ENCODE measurements at regions of chr2 and their contacts with region 1.

Region 1: GRCh38 chr2:237674731-237675276 is 47.4 kb downstream of the LRRFIP1 start:
- DNase-seq: no peak
- ATAC-seq: peak; percentile 35; the same call in 1 of the 2 replicates
- H3K4me3 ChIP-seq: no peak overlapping the region
- H3K27ac ChIP-seq: no peak overlapping the region
- H3K4me1 ChIP-seq: peaks cover 5 to 21% of the 10 kb centered on the region in 2 experiments
- H3K27me3 ChIP-seq: peaks cover 5% of the 10 kb centered on the region; the same call in 1 of the 2 replicates
- CTCF ChIP-seq: no peak
- POLR2A ChIP-seq: no peak
- RAD21 ChIP-seq: no peak

Region 2: DNA sequence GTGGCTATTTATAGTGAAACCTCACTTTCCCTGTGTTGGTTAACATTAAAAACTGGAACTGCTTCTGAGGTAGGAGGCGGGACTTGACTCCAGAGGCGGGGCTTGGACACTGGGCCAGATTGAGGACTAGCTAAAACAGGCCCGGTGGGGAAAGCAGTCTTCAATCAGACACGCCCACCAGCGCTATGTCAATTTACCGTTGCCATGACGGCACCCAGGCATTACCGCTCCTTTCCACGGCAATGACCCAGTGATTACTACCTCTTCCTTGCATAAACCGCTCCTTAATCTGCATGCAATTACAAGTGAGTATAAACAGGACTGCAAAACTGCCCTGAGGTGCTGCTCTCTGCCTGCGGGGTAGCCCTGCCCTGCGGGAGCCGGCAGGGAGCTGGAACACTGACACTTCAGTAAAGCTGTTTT is 12.1 kb before region 1 on chr2:
- CTCF ChIA-PET with region 1: interaction called, 16 read pairs
- POLR2A ChIA-PET with region 1: no interaction called
- RAD21 ChIA-PET with region 1: no interaction called
- intact Hi-C with region 1: no loop called
- DNase-seq: peak; percentile 61
- ATAC-seq: peak; percentile 96
- H3K4me3 ChIP-seq: no peak overlapping the region
- H3K27ac ChIP-seq: no peak overlapping the region
- H3K4me1 ChIP-seq: peaks cover 6 to 9% of the 10 kb centered on the region in 2 experiments
- H3K27me3 ChIP-seq: 0 out of 2 replicates have a peak, but pooled peaks cover 3% of the 10 kb centered on the region
- CTCF ChIP-seq: no peak
- POLR2A ChIP-seq: no peak
- RAD21 ChIP-seq: no peak

Region 3: GRCh38 chr2:237685408-237685807 is 10.6 kb after region 1 on chr2:
- CTCF ChIA-PET with region 1: interaction called, 23 read pairs
- POLR2A ChIA-PET with region 1: no interaction called
- RAD21 ChIA-PET with region 1: no interaction called
- intact Hi-C with region 1: no loop called
- DNase-seq: no peak
- ATAC-seq: peak; percentile 60
- H3K4me3 ChIP-seq: no peak overlapping the region
- H3K27ac ChIP-seq: no peak overlapping the region
- H3K4me1 ChIP-seq: peaks cover 26 to 28% of the 10 kb centered on the region in 2 experiments
- H3K27me3 ChIP-seq: no peaks in the 10 kb centered on the region
- CTCF ChIP-seq: peak; percentile 35 to 60 (median 45); a peak in 5 of 6 replicates
- POLR2A ChIP-seq: no peak
- RAD21 ChIP-seq: no peak

Region 4: GRCh38 chr2:237744613-237745249 is 69.9 kb after region 1 on chr2:
- CTCF ChIA-PET with region 1: interaction called, 70 read pairs
- POLR2A ChIA-PET with region 1: no interaction called
- RAD21 ChIA-PET with region 1: interaction called, 5 to 7 read pairs
- intact Hi-C with region 1: loop called (anchors 1 kb)
- DNase-seq: peak; percentile 23
- ATAC-seq: peak; percentile 89
- H3K4me3 ChIP-seq: no peak overlapping the region
- H3K27ac ChIP-seq: no peak overlapping the region
- H3K4me1 ChIP-seq: peaks cover 3 to 19% of the 10 kb centered on the region in 2 experiments; a peak in 2 of 4 replicates
- H3K27me3 ChIP-seq: no peaks in the 10 kb centered on the region
- CTCF ChIP-seq: peak; percentile 89 to 98 (median 95)
- POLR2A ChIP-seq: no peak
- RAD21 ChIP-seq: peak; percentile 97

Region 5: DNA sequence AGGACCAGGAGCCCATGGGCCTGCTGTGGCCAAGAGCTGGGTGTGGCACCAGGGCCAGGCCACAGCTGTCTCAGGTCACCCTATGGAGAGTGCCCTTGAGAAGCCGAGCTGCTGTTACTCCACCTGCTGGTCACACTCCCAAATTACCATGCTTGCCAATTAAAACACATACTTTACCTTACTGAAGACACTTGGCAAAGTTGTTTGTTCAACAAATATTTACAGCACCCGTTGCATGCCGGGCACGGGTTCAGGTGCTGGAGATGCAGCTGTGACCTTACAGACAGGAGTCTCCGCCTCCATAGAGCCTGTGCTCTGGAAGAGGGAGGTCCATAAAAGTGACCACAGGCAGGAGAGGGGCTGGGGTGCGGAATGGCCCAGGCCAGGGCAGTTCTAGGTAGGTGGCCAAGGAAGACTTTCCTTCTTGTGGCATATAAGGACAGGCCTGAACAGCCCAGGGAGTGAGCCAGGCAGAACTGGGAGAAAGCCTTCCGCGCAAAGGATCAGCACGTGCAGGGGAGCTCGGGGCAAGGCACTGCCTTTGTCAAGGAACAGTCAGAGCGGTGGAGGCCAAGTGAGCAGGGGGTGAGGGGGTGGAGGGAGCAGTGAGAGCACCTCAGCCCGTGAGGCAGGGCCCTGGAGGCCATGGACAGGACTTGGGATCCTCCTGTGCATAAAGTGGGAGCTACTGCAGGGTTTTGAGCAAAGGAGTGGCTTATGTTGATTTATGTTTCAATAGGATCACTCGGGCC is 100.2 kb after region 1 on chr2:
- CTCF ChIA-PET with region 1: interaction called, 31 read pairs
- POLR2A ChIA-PET with region 1: no interaction called
- RAD21 ChIA-PET with region 1: interaction called in 1 of 2 experiments, 7 read pairs
- intact Hi-C with region 1: loop called (anchors 1 kb)
- DNase-seq: peak; percentile 56
- ATAC-seq: peak; percentile 97
- H3K4me3 ChIP-seq: no peak overlapping the region
- H3K27ac ChIP-seq: no peak overlapping the region
- H3K4me1 ChIP-seq: no peaks in the 10 kb centered on the region
- H3K27me3 ChIP-seq: no peaks in the 10 kb centered on the region
- CTCF ChIP-seq: peak; percentile 49 to 74 (median 71); a peak in 5 of 6 replicates
- POLR2A ChIP-seq: no peak
- RAD21 ChIP-seq: peak; percentile 62

Measured in HCT116 (cell line).